ENCODE measurements at regions of chr1 and their contacts with region 1.

Region 1: GRCh38 chr1:22025368-22026155 is 24.1 kb downstream of the CELA3A start:
- DNase-seq: peak; percentile 68 to 94 (median 89)
- ATAC-seq: peak; percentile 83
- H3K4me3 ChIP-seq: peak overlapping the region; percentile 91
- H3K4me3 Mint-ChIP-seq: peak overlapping the region; percentile 89 to 97 (median 94)
- H3K27ac ChIP-seq: peak overlapping the region; percentile 99
- H3K27ac Mint-ChIP-seq: peak overlapping the region; percentile 95 to 100 (median 98)
- H3K4me1 ChIP-seq: peaks cover 23 to 28% of the 10 kb centered on the region in 2 donors
- H3K4me1 Mint-ChIP-seq: peaks cover 33 to 76% (median 59%) of the 10 kb centered on the region in 7 donors
- H3K27me3 ChIP-seq: no peaks in the 10 kb centered on the region
- H3K27me3 Mint-ChIP-seq: no peaks in the 10 kb centered on the region

Region 2: GRCh38 chr1:21508580-21509350 is 516.8 kb before region 1 on chr1:
- CTCF ChIA-PET with region 1: no interaction called
- POLR2A ChIA-PET with region 1: no interaction called
- intact Hi-C with region 1: loop called in 1 of 2 experiments (anchors 2 kb)
- DNase-seq: peak; percentile 20 to 83 (median 48)
- ATAC-seq: peak; percentile 90
- H3K4me3 ChIP-seq: no peak overlapping the region
- H3K4me3 Mint-ChIP-seq: peak overlapping the region; percentile 68 to 95 (median 80)
- H3K27ac ChIP-seq: no peak overlapping the region
- H3K27ac Mint-ChIP-seq: peak overlapping the region in 1 of 9 donors; percentile 25
- H3K4me1 ChIP-seq: peaks cover 0 to 5% of the 10 kb centered on the region in 2 donors
- H3K4me1 Mint-ChIP-seq: peaks cover 4 to 18% (median 7%) of the 10 kb centered on the region in 7 donors
- H3K27me3 ChIP-seq: peaks cover 0 to 5% of the 10 kb centered on the region in 2 donors
- H3K27me3 Mint-ChIP-seq: peaks cover 55 to 64% (median 60%) of the 10 kb centered on the region in 5 donors

Region 3: GRCh38 chr1:21782868-21783678 is 242.5 kb before region 1 on chr1 and contains the start of gene USP48:
- CTCF ChIA-PET with region 1: no interaction called
- POLR2A ChIA-PET with region 1: interaction called, 24 read pairs
- intact Hi-C with region 1: loop called (anchors 1 kb)
- DNase-seq: peak; percentile 95 to 98 (median 97)
- ATAC-seq: peak; percentile 92
- H3K4me3 ChIP-seq: peak within 1 kb of the TSS; percentile 93
- H3K4me3 Mint-ChIP-seq: peak within 1 kb of the TSS; percentile 92 to 99 (median 98)
- H3K27ac ChIP-seq: peak within 1 kb of the TSS; percentile 99
- H3K27ac Mint-ChIP-seq: peak within 1 kb of the TSS; percentile 99 to 100 (median 100)
- H3K4me1 ChIP-seq: peaks cover 19 to 23% of the 10 kb centered on the region in 2 donors
- H3K4me1 Mint-ChIP-seq: peaks cover 19 to 40% (median 34%) of the 10 kb centered on the region in 7 donors
- H3K27me3 ChIP-seq: no peaks in the 10 kb centered on the region
- H3K27me3 Mint-ChIP-seq: peaks cover 0 to 9% (median 0%) of the 10 kb centered on the region in 5 donors
- total RNA-seq, gene USP48: 74.7 to 107 (median 83.9) TPM

Region 4: GRCh38 chr1:22052115-22053016 is 26.8 kb after region 1 on chr1 and contains the start of gene CDC42:
- CTCF ChIA-PET with region 1: interaction called, 56 read pairs
- POLR2A ChIA-PET with region 1: interaction called, 774 read pairs
- intact Hi-C with region 1: loop called (anchors 1 kb)
- DNase-seq: peak; percentile 95 to 99 (median 98)
- ATAC-seq: peak; percentile 96
- H3K4me3 ChIP-seq: peak within 1 kb of the TSS; percentile 74
- H3K4me3 Mint-ChIP-seq: peak within 1 kb of the TSS; percentile 96 to 100 (median 99)
- H3K27ac ChIP-seq: peak within 1 kb of the TSS; percentile 98
- H3K27ac Mint-ChIP-seq: peak within 1 kb of the TSS; percentile 91 to 100 (median 99)
- H3K4me1 ChIP-seq: peaks cover 38 to 45% of the 10 kb centered on the region in 2 donors
- H3K4me1 Mint-ChIP-seq: peaks cover 50 to 79% (median 61%) of the 10 kb centered on the region in 7 donors
- H3K27me3 ChIP-seq: no peaks in the 10 kb centered on the region
- H3K27me3 Mint-ChIP-seq: peaks cover 0 to 2% (median 0%) of the 10 kb centered on the region in 5 donors
- total RNA-seq, gene CDC42: 186 to 385 (median 305) TPM

Region 5: GRCh38 chr1:22105611-22106207 is 80.1 kb after region 1 on chr1:
- CTCF ChIA-PET with region 1: interaction called, 9 read pairs
- POLR2A ChIA-PET with region 1: interaction called, 12 read pairs
- intact Hi-C with region 1: loop called in 1 of 2 experiments (anchors 1 kb)
- DNase-seq: peak in 7 of 9 donors; percentile 34 to 61 (median 51)
- ATAC-seq: peak; percentile 79
- H3K4me3 ChIP-seq: peak overlapping the region; percentile 2
- H3K4me3 Mint-ChIP-seq: peak overlapping the region; percentile 22 to 79 (median 48)
- H3K27ac ChIP-seq: peak overlapping the region; percentile 24
- H3K27ac Mint-ChIP-seq: peak overlapping the region; percentile 70 to 94 (median 88)
- H3K4me1 ChIP-seq: peaks cover 25 to 41% of the 10 kb centered on the region in 2 donors
- H3K4me1 Mint-ChIP-seq: peaks cover 49 to 86% (median 72%) of the 10 kb centered on the region in 7 donors
- H3K27me3 ChIP-seq: no peaks in the 10 kb centered on the region
- H3K27me3 Mint-ChIP-seq: no peaks in the 10 kb centered on the region

Region 6: GRCh38 chr1:22388671-22389450 is 363.3 kb after region 1 on chr1:
- CTCF ChIA-PET with region 1: no interaction called
- POLR2A ChIA-PET with region 1: no interaction called
- intact Hi-C with region 1: no loop called
- DNase-seq: no peak
- ATAC-seq: no peak
- H3K4me3 ChIP-seq: no peak overlapping the region
- H3K4me3 Mint-ChIP-seq: no peak overlapping the region
- H3K27ac ChIP-seq: no peak overlapping the region
- H3K27ac Mint-ChIP-seq: no peak overlapping the region
- H3K4me1 ChIP-seq: no peaks in the 10 kb centered on the region
- H3K4me1 Mint-ChIP-seq: no peaks in the 10 kb centered on the region
- H3K27me3 ChIP-seq: peaks cover 0 to 4% of the 10 kb centered on the region in 2 donors
- H3K27me3 Mint-ChIP-seq: peaks cover 17 to 73% (median 46%) of the 10 kb centered on the region in 5 donors